AG04449 (cell line): ENCODE measurements at regions of chr7 and their contacts with region 1.

Region 1: GRCh38 chr7:77759294-77759889 is 38.8 kb downstream of the TMEM60 start:
- DNase-seq: no peak
- H3K4me3 ChIP-seq: no peak overlapping the region
- CTCF ChIP-seq: peak; percentile 60

Region 2: GRCh38 chr7:77657427-77658224 is 101.8 kb before region 1 on chr7:
- CTCF ChIA-PET with region 1: interaction called, 203 read pairs
- POLR2A ChIA-PET with region 1: no interaction called
- DNase-seq: peak; percentile 16
- H3K4me3 ChIP-seq: no peak overlapping the region
- CTCF ChIP-seq: peak; percentile 13

Region 3: GRCh38 chr7:77674878-77675277 is 84.5 kb before region 1 on chr7:
- CTCF ChIA-PET with region 1: interaction called, 11 read pairs
- POLR2A ChIA-PET with region 1: no interaction called
- DNase-seq: no peak
- H3K4me3 ChIP-seq: no peak overlapping the region
- CTCF ChIP-seq: no peak

Region 4: DNA sequence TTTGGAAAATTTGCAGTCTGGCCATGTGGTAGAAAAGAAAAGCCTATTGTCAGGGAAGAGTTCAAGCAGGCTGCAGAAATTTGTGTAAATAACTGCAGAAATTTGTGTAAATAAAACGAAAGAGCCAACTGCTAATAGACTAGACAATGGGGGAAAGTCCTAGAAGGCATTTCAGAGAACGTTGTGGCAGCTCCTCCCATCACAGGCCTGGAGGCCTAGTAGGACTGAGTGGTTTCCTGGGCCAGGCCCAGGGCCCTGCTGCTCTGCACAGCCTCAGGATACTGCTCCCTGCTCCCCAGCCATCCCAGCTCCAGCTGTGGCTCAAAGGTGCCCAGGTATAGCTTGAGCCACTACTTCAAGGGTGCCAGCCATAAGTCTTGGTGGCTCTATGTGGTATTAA is 12.2 kb before region 1 on chr7:
- CTCF ChIA-PET with region 1: interaction called, 33 read pairs
- POLR2A ChIA-PET with region 1: no interaction called
- DNase-seq: no peak
- H3K4me3 ChIP-seq: no peak overlapping the region
- CTCF ChIP-seq: no peak

Region 5: GRCh38 chr7:77780496-77780895 is 21.1 kb after region 1 on chr7:
- CTCF ChIA-PET with region 1: interaction called, 13 read pairs
- POLR2A ChIA-PET with region 1: no interaction called
- DNase-seq: no peak
- H3K4me3 ChIP-seq: no peak overlapping the region
- CTCF ChIP-seq: no peak